IMR-90 (cell line): ENCODE measurements at regions of chr11 and their contacts with region 1.

Region 1: GRCh38 chr11:8964324-8965320 is at the start of gene TMEM9B:
- DNase-seq: peak; percentile 79
- ATAC-seq: peak; percentile 91
- H3K4me3 ChIP-seq: peak within 1 kb of the TSS; percentile 63
- H3K27ac ChIP-seq: peak within 1 kb of the TSS; percentile 85
- H3K4me1 ChIP-seq: peaks cover 6% of the 10 kb centered on the region
- H3K27me3 ChIP-seq: no peaks in the 10 kb centered on the region
- CTCF ChIP-seq: no peak
- POLR2A ChIP-seq: peak; percentile 72
- RAD21 ChIP-seq: no peak
- total RNA-seq, gene TMEM9B: 25.6 and 40.0 TPM in 2 replicates

Region 2: GRCh38 chr11:8688414-8689362 is 275.9 kb before region 1 on chr11:
- CTCF ChIA-PET with region 1: interaction called, 5 read pairs
- POLR2A ChIA-PET with region 1: no interaction called
- dilution Hi-C with region 1: no loop called
- in situ Hi-C with region 1: no loop called
- intact Hi-C with region 1: loop called (anchors 1 kb)
- DNase-seq: peak; percentile 96
- ATAC-seq: peak; percentile 89
- H3K4me3 ChIP-seq: peak overlapping the region; percentile 52
- H3K27ac ChIP-seq: peak overlapping the region; percentile 77
- H3K4me1 ChIP-seq: peaks cover 7% of the 10 kb centered on the region
- H3K27me3 ChIP-seq: no peaks in the 10 kb centered on the region
- CTCF ChIP-seq: peak; percentile 20; the same call in 1 of the 2 replicates
- POLR2A ChIP-seq: peak; percentile 80
- RAD21 ChIP-seq: peak; percentile 40

Region 3: DNA sequence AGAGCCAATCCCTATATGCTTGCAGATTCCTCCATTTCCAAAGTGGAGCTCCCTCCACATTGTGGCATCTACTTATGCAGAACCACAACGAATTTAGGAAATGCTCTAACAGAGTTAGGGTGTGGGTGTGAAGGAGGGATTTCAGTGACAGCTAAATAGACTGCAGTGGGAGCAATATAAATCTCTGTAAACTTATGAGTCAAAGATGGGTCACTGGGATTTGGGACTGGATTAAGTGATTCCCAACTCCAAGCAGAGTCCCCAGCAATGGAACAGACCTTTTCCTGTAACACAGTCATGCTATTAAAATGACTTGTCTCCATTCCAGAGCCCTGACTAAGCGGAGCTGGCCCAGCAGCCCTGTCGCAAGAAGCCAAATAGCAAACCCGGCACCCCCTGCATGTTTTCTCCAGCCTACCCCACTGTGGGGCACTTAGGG is 245.4 kb before region 1 on chr11:
- CTCF ChIA-PET with region 1: no interaction called
- POLR2A ChIA-PET with region 1: no interaction called
- dilution Hi-C with region 1: no loop called
- in situ Hi-C with region 1: no loop called
- intact Hi-C with region 1: no loop called
- DNase-seq: peak; percentile 96
- ATAC-seq: peak; percentile 54
- H3K4me3 ChIP-seq: no peak overlapping the region
- H3K27ac ChIP-seq: peak overlapping the region; percentile 99
- H3K4me1 ChIP-seq: peaks cover 62% of the 10 kb centered on the region
- H3K27me3 ChIP-seq: no peaks in the 10 kb centered on the region
- CTCF ChIP-seq: no peak
- POLR2A ChIP-seq: no peak
- RAD21 ChIP-seq: peak; percentile 1; the same call in 1 of the 2 replicates

Region 4: GRCh38 chr11:8823174-8823742 is 141.4 kb before region 1 on chr11:
- CTCF ChIA-PET with region 1: no interaction called
- POLR2A ChIA-PET with region 1: no interaction called
- dilution Hi-C with region 1: no loop called
- in situ Hi-C with region 1: no loop called
- intact Hi-C with region 1: no loop called
- DNase-seq: no peak
- ATAC-seq: no peak
- H3K4me3 ChIP-seq: no peak overlapping the region
- H3K27ac ChIP-seq: no peak overlapping the region
- H3K4me1 ChIP-seq: peaks cover 12% of the 10 kb centered on the region
- H3K27me3 ChIP-seq: no peaks in the 10 kb centered on the region
- CTCF ChIP-seq: no peak
- POLR2A ChIP-seq: no peak
- RAD21 ChIP-seq: no peak

Region 5: GRCh38 chr11:8870411-8871170 is 94.0 kb before region 1 on chr11:
- CTCF ChIA-PET with region 1: interaction called, 3 read pairs
- POLR2A ChIA-PET with region 1: interaction called, 3 read pairs
- dilution Hi-C with region 1: no loop called
- in situ Hi-C with region 1: no loop called
- intact Hi-C with region 1: loop called (anchors 5 kb)
- DNase-seq: peak; percentile 75
- ATAC-seq: peak; percentile 79
- H3K4me3 ChIP-seq: peak overlapping the region; percentile 51
- H3K27ac ChIP-seq: peak overlapping the region; percentile 78
- H3K4me1 ChIP-seq: peaks cover 12% of the 10 kb centered on the region
- H3K27me3 ChIP-seq: no peaks in the 10 kb centered on the region
- CTCF ChIP-seq: no peak
- POLR2A ChIP-seq: no peak
- RAD21 ChIP-seq: no peak

Region 6: DNA sequence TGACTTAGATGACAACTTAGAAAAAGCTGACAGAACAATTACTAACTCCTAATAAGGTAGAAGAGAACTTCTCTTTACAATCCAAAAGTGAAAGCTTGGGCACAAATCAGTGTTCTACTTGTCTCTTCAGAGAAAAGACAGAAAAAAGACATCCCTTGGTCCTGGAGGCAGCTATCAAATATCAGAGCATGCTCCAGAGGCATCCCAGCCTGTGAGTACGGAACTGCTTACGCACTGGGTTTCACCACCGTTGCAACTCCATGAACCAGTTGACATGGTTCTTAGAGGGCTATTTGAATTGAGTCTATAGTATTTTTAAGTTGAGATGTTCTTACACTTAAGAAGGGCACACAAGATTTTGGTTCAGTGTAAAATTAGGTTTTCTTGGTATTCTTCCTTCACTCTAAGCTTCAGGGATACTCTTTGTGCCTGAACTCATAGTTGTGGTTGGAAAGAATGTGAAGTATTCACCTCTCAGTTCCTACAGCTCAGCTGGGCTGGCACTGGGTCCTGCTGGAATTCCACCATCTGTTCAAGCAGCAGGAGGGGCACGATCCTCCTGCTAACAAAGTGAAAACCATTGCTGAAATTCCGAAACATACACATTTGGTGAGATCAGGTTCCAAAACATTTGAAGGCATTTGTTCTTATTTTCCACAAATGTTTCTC is 47.3 kb before region 1 on chr11:
- CTCF ChIA-PET with region 1: interaction called, 8 read pairs
- POLR2A ChIA-PET with region 1: interaction called, 4 read pairs
- dilution Hi-C with region 1: no loop called
- in situ Hi-C with region 1: loop called (anchors 5 kb)
- intact Hi-C with region 1: loop called (anchors 1 kb)
- DNase-seq: peak; percentile 93
- ATAC-seq: peak; percentile 90
- H3K4me3 ChIP-seq: no peak overlapping the region
- H3K27ac ChIP-seq: peak overlapping the region; percentile 93
- H3K4me1 ChIP-seq: peaks cover 20% of the 10 kb centered on the region
- H3K27me3 ChIP-seq: no peaks in the 10 kb centered on the region
- CTCF ChIP-seq: peak; percentile 18; the same call in 1 of the 2 replicates
- POLR2A ChIP-seq: no peak
- RAD21 ChIP-seq: no peak

Region 7: DNA sequence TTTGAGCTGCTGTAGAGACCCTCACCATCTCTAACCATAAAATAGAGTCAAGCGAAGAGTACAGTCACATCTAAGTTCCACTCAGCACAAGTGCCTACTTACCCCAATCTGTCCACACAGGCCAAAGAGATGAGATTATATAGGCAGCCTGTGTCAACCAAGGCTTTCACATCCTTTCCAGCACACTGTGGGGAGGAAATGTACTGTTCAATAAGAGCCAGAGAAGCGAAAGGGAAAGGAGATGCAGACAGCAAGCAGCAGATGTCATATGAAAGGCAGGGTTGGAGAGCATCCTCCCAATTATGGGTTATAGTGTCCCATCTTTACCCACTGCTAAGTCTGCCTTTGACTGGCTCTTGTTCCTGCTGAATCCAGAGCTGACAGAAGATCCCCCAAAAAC is 22.8 kb after region 1 on chr11:
- CTCF ChIA-PET with region 1: no interaction called
- POLR2A ChIA-PET with region 1: interaction called, 11 read pairs
- dilution Hi-C with region 1: no loop called
- in situ Hi-C with region 1: no loop called
- intact Hi-C with region 1: no loop called
- DNase-seq: no peak
- ATAC-seq: no peak
- H3K4me3 ChIP-seq: no peak overlapping the region
- H3K27ac ChIP-seq: no peak overlapping the region
- H3K4me1 ChIP-seq: peaks cover 5% of the 10 kb centered on the region
- H3K27me3 ChIP-seq: no peaks in the 10 kb centered on the region
- CTCF ChIP-seq: no peak
- POLR2A ChIP-seq: no peak
- RAD21 ChIP-seq: no peak

Region 8: GRCh38 chr11:9479899-9480298 is 515.3 kb after region 1 on chr11:
- CTCF ChIA-PET with region 1: no interaction called
- POLR2A ChIA-PET with region 1: no interaction called
- dilution Hi-C with region 1: no loop called
- in situ Hi-C with region 1: no loop called
- intact Hi-C with region 1: no loop called
- DNase-seq: no peak
- ATAC-seq: no peak
- H3K4me3 ChIP-seq: no peak overlapping the region
- H3K27ac ChIP-seq: no peak overlapping the region
- H3K4me1 ChIP-seq: no peaks in the 10 kb centered on the region
- H3K27me3 ChIP-seq: no peaks in the 10 kb centered on the region
- CTCF ChIP-seq: no peak
- POLR2A ChIP-seq: no peak
- RAD21 ChIP-seq: no peak